ENCODE measurements at regions of chrX and their contacts with region 1.

Region 1: DNA sequence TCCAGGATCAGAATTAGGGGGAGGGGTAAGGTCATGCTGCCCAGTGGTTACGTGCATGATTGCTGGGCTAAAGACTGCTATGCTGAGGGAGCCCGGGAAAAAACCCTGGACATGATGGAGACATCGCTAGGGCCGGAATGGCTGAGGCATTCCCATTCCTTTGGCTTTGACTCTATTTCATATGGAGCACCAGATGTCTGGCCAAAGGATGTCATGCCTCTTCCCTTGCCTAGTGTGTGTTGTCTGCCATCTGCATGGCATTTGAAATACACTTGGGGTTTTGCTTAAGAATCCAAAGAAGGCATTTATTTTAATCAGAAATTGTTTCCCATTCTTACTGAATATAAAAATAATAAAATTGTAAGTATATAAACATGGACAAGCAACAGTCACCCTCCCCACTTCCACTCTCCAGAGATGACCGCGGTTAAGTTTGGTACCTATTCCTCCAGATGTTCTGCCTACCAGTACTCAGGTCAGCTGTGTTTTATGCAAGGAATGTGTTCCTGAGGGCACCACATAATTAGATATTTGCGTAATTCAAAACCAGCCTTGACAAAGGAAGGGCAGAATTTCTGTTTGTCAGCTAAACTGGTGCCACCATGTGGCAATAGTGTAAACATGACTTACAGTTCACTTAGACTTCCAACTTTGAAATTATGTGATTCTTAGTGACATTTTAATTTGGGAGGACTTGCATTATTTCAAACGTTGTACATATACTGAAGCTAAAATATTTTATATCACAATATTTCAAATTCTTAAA is 105.9 kb downstream of the CT47B1 start:
- DNase-seq: peak; percentile 6
- H3K4me3 ChIP-seq: no peak overlapping the region
- H3K27ac ChIP-seq: no peak overlapping the region
- H3K4me1 ChIP-seq: no peaks in the 10 kb centered on the region
- H3K27me3 ChIP-seq: no peaks in the 10 kb centered on the region
- CTCF ChIP-seq: peak in 2 of 4 experiments; percentile 36 to 40
- POLR2A ChIP-seq: no peak

Region 2: DNA sequence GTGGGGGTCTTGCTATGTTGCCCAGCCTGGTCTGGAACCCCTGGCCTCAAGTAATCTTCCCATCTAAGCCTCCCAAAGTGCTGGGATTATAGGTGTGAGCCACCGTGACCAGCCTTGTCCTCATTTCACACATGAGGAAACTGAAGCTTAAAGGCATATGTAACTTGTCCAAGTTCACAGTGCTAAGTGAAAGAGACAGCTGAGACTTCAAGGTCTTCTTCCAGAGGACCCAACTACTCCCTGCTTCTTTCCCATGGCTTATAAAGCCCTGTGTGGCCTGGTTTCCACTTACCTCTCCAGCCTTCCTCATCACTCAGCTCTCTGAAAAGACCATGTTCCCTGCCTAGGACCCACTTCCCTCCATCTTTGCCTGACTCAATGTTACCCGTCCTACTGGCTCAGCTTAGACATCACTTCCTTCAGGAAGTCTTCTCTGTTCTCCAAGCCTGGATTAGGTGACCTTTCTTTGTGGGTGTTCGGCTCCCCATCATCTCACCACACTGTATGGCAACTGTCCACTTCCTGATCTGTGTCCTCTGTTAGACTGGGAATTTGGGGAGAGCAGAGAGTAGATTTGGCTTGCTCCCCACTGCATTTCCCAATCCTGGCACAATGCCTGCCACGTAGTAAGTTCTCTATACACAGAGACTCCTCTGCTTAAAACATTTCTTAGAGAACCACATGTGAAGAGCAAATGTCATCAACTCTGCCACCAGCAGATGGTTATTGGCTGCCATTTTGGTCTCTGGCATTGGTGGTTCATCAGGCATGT is 270.3 kb before region 1 on chrX:
- intact Hi-C with region 1: loop called (anchors 10 kb)
- DNase-seq: no peak
- H3K4me3 ChIP-seq: no peak overlapping the region
- H3K27ac ChIP-seq: no peak overlapping the region
- H3K4me1 ChIP-seq: no peaks in the 10 kb centered on the region
- H3K27me3 ChIP-seq: no peaks in the 10 kb centered on the region
- CTCF ChIP-seq: no peak
- POLR2A ChIP-seq: no peak

Region 3: DNA sequence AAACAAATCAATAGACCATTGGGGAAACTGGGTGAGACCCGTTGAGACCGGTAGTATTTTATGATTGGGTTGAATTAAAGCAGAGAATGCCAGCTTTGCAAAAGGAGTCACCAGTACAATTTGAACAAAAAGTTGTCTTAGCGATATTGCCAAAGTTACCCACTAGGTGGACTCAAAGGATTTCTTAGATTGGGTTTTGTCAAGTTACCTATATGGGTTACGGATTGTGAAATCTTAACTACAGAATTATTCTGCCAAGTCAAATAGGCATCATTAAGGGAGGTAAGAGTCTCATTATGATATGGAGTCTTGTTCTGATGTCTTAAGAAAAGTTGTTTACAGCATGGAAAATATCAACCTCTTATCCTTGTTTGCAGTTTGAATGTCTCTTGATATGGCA is 230.8 kb after region 1 on chrX:
- intact Hi-C with region 1: no loop called
- DNase-seq: no peak
- H3K4me3 ChIP-seq: no peak overlapping the region
- H3K27ac ChIP-seq: no peak overlapping the region
- H3K4me1 ChIP-seq: no peaks in the 10 kb centered on the region
- H3K27me3 ChIP-seq: no peaks in the 10 kb centered on the region
- CTCF ChIP-seq: peak in 1 of 4 experiments; percentile 15
- POLR2A ChIP-seq: no peak

Region 4: DNA sequence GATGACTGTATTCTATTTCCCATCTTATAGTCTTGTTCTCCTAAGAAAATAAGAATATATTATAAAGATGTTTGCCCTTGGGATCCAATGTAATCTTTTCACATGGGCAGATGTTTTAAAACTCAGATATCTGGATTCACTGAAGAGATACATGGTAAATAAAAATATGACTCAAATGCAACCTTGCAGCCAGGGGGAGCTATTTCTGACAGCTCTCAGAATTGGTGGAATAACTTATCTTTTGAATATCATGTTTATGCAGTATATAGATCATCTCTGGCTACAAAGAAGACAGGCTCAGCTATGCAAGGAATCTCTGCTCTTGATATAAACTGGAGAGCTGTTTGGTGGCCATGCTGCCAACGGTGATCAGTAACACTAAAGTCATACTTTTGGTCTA is 552.4 kb after region 1 on chrX:
- intact Hi-C with region 1: no loop called
- DNase-seq: no peak
- H3K4me3 ChIP-seq: no peak overlapping the region
- H3K27ac ChIP-seq: no peak overlapping the region
- H3K4me1 ChIP-seq: no peaks in the 10 kb centered on the region
- H3K27me3 ChIP-seq: no peaks in the 10 kb centered on the region
- CTCF ChIP-seq: no peak
- POLR2A ChIP-seq: no peak

Measured in prostate gland (tissue), 2 donors.